Heart right ventricle (tissue), 16 donors: ENCODE measurements at regions of chr4 and their contacts with region 1.

Region 1: DNA sequence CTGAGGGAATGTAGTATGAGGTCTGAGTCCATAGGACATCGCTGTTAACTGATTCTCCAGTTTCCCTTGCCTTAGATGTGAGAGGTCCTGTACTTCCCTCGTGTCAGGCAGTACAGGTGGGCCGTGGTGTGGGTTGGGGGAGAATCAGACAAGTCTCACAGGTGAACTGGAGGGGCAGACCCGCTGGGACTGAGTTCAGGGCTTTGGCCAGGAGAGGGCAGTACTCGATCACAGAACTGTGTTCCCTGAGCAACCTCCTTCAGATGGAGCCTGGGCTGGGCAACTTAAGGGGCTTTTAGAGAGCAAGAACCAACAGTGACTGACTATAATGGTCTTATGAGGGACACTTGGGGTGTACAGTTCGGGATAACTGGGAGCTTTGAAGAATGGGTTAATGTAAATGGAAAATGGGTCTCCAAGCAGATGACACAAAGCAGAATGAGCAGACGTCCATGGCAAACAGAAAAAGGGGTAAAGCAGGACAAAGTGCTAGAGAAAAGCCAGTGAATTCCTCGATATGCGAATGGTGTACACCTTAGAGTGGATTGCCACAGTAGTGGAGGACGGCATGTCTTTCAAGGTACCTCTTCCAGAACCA is 83.6 kb downstream of the CCNG2 start:
- DNase-seq: peak; percentile 15 to 40
- ATAC-seq: peak; percentile 61 to 79 (median 70)
- H3K4me3 ChIP-seq: no peak overlapping the region
- H3K27ac ChIP-seq: no peak overlapping the region
- H3K4me1 ChIP-seq: no peaks in the 10 kb centered on the region
- H3K27me3 ChIP-seq: peaks cover 0 to 17% (median 3%) of the 10 kb centered on the region in 7 donors
- CTCF ChIP-seq: peak; percentile 17 to 78 (median 70)

Region 2: DNA sequence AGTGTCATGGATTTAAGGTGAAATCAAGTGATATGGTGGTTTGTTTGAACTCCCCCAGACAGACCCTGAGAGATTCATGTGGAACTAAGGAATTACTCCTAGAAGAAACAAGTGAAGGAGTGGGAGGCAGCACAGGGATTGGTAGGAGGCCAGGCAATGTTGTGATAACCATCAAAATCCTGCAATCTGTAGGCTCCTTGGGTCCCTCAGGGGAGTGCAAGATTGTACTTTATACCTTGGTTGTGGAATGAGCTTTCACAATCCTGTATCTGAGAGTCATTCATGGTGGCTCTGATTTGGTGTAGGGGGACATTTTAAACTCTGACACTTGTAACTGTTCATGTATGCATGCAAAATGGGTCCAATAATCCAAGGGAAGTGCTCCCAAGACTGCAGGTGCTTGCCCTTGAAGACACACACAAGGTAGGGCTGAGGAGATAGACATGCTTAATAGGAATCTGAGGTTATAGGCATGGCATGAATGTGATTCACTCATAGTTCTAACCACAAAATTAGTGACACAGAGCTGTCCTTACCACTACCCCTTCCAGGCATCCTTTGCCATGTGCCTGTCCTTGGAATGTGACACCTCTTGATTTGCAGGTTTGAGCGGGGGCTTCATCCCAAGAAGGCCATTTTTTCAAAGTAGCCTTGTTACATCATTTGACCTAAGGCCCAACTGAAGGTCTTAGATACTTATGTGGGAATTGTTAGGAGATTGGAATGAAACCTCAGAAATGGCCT is 28.8 kb after region 1 on chr4:
- intact Hi-C with region 1: no loop called
- DNase-seq: no peak
- ATAC-seq: no peak
- H3K4me3 ChIP-seq: no peak overlapping the region
- H3K27ac ChIP-seq: no peak overlapping the region
- H3K4me1 ChIP-seq: no peaks in the 10 kb centered on the region
- H3K27me3 ChIP-seq: no peaks in the 10 kb centered on the region
- CTCF ChIP-seq: no peak

Region 3: DNA sequence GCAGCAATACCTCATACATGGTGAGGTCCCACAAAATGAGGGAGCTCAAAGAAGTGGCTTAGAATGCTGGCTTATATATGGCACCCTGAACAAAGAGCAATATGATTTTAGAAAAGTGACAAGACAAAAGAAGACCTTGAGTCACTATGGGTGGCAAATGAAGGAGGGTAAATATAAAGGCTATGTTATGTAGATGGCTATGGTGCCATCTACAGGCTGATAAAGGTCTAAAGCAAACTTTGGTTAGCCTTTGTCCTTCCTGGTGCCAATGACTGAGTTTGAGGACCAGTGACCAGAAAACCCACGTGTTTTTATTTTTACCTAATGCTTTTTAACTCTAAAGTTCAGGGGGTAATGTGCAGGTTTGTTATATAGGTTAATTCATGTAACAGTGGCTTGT is 68.3 kb after region 1 on chr4:
- intact Hi-C with region 1: loop called in 1 of 10 experiments (anchors 5 kb)
- DNase-seq: no peak
- ATAC-seq: peak in 4 of 8 donors; percentile 39 to 67 (median 62)
- H3K4me3 ChIP-seq: no peak overlapping the region
- H3K27ac ChIP-seq: no peak overlapping the region
- H3K4me1 ChIP-seq: no peaks in the 10 kb centered on the region
- H3K27me3 ChIP-seq: peaks cover 0 to 4% (median 0%) of the 10 kb centered on the region in 7 donors
- CTCF ChIP-seq: peak in 7 of 9 donors; percentile 26 to 51 (median 45)

Region 4: DNA sequence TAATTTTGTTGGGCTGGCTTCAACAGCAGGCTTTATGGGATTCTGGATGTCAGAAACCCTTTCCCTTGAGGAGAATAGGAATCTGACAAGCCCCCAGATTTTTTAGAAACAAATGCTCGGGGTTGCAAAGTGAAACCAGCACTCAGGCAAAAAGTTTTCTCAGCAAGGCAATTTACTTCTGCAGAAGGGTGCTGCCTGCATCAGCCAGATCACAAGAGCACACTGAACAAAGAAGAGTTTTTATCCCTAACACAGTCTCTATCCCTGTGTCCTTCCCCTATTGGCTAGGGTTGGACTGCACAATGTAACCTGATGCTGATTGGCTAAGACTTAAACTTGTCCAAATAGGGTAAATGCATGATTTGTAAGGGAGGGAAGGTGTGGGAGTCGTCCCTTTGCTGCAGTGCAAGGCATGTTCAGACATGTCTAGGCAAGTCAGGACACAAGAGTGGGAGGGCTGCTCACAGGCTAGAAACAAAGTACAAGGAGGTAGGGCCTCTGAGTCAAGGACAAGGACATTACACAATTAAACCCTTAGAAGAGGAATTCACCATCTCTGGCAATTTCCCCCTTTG is 92.2 kb after region 1 on chr4:
- intact Hi-C with region 1: no loop called
- DNase-seq: no peak
- ATAC-seq: no peak
- H3K4me3 ChIP-seq: no peak overlapping the region
- H3K27ac ChIP-seq: no peak overlapping the region
- H3K4me1 ChIP-seq: no peaks in the 10 kb centered on the region
- H3K27me3 ChIP-seq: peaks cover 0 to 9% (median 0%) of the 10 kb centered on the region in 7 donors
- CTCF ChIP-seq: no peak

Region 5: GRCh38 chr4:77358315-77358928 is 117.9 kb after region 1 on chr4:
- intact Hi-C with region 1: loop called (anchors 1 to 5 kb)
- DNase-seq: peak in 1 of 2 donors; percentile 21
- ATAC-seq: peak in 6 of 8 donors; percentile 42 to 77 (median 66)
- H3K4me3 ChIP-seq: no peak overlapping the region
- H3K27ac ChIP-seq: no peak overlapping the region
- H3K4me1 ChIP-seq: no peaks in the 10 kb centered on the region
- H3K27me3 ChIP-seq: peaks cover 0 to 5% (median 0%) of the 10 kb centered on the region in 7 donors
- CTCF ChIP-seq: peak; percentile 19 to 71 (median 60)

Region 6: DNA sequence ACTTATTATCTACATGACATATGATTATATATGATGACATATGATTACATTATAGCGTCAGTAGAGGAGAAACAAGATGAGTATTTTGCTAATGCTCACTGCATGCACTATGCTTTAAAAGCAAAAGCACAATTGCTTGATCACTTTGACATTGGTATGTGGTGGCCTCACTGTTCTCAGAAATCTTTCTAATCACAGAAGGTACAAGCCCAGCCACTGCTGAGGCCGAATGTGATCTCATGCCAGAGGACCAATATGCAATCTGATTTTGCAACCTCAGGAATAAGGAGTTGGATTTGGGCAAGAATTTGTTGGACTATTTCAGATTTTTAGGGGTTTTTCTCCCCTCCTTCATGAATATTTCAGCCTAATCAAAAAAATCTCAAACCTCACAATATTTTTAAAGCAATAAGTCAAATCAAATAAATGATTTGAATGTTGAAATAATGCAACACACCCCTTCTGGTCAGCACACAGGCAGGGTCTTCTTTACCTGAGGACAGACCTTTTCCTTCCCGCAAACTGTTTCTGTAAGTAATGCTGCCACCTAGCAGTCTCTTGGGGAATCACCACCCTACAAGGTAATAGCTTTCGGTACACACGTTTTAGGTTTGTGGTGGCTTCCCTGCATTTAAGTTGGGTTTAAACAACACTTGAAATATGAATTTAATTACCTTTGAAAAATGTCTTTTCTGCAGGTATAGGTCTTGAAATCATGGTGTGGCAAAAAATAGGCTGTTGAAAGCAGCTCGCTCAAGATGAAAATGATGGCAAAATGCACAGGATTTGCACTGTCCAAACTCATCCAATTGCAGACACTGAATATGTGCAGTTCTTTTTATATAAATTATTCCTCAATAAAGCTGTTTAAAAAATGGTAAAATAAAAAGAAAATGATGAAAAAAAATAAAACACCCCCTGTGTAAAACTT is 360.2 kb after region 1 on chr4:
- intact Hi-C with region 1: loop called in 1 of 10 experiments (anchors 10 kb)
- DNase-seq: no peak
- ATAC-seq: no peak
- H3K4me3 ChIP-seq: no peak overlapping the region
- H3K27ac ChIP-seq: no peak overlapping the region
- H3K4me1 ChIP-seq: no peaks in the 10 kb centered on the region
- H3K27me3 ChIP-seq: no peaks in the 10 kb centered on the region
- CTCF ChIP-seq: peak; percentile 43 to 87 (median 76)